ENCODE measurements at regions of chr3 and their contacts with region 1.

Region 1: DNA sequence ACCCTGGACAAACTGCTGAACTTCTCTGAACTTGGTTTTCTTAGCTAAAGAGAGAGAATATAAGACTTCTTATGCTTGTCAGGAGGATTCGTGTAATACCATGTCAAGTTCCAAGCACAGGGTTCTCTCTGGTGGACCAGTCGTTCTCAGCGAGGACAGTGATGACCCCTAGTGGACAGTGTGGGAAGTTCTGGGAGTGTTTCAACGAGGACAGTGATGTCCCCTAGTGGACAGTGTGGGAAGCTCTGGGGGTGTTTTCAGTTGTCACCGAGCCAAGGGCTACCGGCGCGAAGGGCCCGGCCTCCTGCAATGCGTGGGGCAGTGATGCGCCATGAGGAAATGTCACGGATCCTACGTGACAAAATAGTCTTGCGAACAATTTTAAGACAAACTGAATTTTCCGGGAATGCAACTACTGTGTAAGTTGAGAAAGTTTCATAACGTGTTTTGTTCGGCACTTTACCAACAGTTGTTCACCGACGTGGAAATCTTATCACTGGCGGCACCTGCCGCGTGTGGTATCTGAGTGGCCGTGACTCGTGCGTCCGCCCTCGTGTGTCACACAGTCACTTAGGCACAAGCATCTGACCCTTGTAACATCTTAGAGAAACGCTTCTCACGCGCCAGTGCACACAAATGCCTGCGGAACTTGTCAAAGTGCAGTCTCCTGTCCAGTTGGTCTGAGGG is 39.3 kb upstream of the MUC4 start:
- DNase-seq: peak; percentile 91 to 96 (median 93)
- H3K4me3 ChIP-seq: peak overlapping the region in 4 of 7 experiments; percentile 9 to 57 (median 38)
- H3K27ac ChIP-seq: peak overlapping the region; percentile 12 to 30
- H3K4me1 ChIP-seq: peaks cover 10 to 50% (median 39%) of the 10 kb centered on the region in 4 experiments
- H3K27me3 ChIP-seq: no peaks in the 10 kb centered on the region

Region 2: GRCh38 chr3:195806211-195806915 is 44.6 kb before region 1 on chr3:
- CTCF ChIA-PET with region 1: interaction called, 11 read pairs
- POLR2A ChIA-PET with region 1: no interaction called
- DNase-seq: peak in 2 of 3 donors; percentile 57 to 63
- H3K4me3 ChIP-seq: no peak overlapping the region
- H3K27ac ChIP-seq: no peak overlapping the region
- H3K4me1 ChIP-seq: peaks cover 12 to 59% (median 48%) of the 10 kb centered on the region in 4 experiments
- H3K27me3 ChIP-seq: no peaks in the 10 kb centered on the region

Region 3: DNA sequence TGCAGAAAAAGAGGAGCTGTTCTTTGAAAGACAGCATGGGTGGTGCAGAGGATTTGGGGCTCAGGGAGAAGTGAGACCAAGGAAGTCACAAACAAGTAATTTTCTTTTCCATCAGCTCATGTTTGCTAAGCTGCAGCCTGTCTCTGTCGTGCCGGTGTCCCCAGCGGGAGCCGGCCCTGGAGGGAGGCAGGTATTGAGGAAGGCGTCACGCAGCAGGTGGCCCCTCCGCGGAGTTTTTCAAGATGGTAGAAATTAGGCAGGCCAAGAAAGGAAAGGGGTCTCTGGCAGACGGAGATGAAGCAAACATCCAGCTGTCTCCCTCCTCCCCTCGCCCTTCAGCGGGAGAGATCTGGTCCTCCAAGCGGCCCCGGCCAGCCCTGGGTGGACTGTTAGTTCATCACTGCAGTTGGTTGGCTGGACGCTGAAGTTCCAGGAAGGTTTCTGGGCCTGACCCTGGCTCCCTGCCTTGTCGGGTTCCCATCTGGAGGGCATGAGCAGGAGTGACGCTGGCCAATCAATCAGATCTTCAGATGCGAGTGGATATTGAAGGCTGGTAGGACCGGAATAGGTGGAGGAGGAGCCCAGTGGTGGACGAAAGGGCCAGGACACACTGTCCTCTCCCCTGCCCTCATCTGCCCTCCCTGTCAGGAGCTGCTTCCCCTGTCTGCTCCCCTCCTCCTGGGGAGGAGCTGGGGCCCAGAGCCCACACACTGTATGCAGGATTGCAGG is 11.6 kb before region 1 on chr3:
- CTCF ChIA-PET with region 1: interaction called, 21 read pairs
- POLR2A ChIA-PET with region 1: no interaction called
- DNase-seq: no peak
- H3K4me3 ChIP-seq: no peak overlapping the region
- H3K27ac ChIP-seq: no peak overlapping the region
- H3K4me1 ChIP-seq: no peaks in the 10 kb centered on the region
- H3K27me3 ChIP-seq: no peaks in the 10 kb centered on the region

Region 4: DNA sequence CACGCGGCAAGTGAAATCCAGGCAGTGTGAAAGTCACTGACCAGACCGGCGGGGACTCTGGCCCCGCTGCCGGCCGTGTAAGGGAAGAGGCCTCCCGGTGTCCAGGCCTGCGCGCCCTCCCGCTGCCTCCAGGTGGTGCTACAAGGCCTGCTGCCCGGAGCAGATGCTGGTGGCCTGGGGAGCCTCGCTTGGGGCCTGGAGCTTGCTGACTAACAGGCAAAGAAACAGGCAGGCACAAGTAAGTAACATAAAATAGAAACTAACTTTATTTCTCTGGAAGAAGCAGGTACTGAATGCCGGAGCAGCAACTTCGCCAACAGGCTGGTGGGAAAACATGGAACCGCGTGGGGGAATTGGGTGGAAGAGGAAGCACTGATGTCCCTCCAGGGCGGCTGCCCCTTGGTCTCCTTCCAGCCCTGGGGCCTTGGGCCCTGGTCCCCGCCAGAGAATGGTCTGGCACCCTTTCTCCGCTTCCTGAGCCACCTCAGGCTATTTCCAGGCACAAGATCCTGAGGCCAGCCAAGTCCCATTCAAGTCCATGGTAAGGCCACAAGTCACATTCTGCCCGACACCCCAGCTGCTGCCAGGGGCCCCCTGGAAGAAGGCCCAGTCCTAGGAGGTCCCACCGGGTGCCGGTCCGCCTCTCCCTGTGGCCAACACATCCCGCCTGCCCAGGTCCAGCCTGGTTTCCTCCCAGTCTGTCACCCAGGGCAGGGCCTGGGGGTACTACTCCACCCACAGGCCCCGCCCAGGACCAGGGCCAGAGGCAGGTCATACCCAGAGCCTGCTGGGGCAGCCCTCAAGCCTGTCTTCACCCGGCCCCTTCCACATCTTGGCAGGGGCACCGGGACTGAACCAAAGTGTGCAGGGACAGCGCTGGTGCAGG is 12.4 kb after region 1 on chr3:
- CTCF ChIA-PET with region 1: interaction called, 23 read pairs
- POLR2A ChIA-PET with region 1: no interaction called
- DNase-seq: peak; percentile 72 to 83 (median 83)
- H3K4me3 ChIP-seq: no peak overlapping the region
- H3K27ac ChIP-seq: no peak overlapping the region
- H3K4me1 ChIP-seq: peaks cover 0 to 23% (median 7%) of the 10 kb centered on the region in 4 experiments
- H3K27me3 ChIP-seq: no peaks in the 10 kb centered on the region

Region 5: GRCh38 chr3:195894780-195895607 is 44.0 kb after region 1 on chr3:
- CTCF ChIA-PET with region 1: interaction called, 238 read pairs
- POLR2A ChIA-PET with region 1: interaction called, 6 read pairs
- DNase-seq: peak; percentile 79 to 85 (median 82)
- H3K4me3 ChIP-seq: peak overlapping the region; percentile 36 to 88 (median 82)
- H3K27ac ChIP-seq: peak overlapping the region; percentile 50 to 83
- H3K4me1 ChIP-seq: peaks cover 4 to 73% (median 67%) of the 10 kb centered on the region in 4 experiments
- H3K27me3 ChIP-seq: no peaks in the 10 kb centered on the region

Region 6: GRCh38 chr3:195909644-195910508 is 58.9 kb after region 1 on chr3:
- CTCF ChIA-PET with region 1: interaction called, 238 read pairs
- POLR2A ChIA-PET with region 1: interaction called, 7 read pairs
- DNase-seq: peak; percentile 74 to 85 (median 80)
- H3K4me3 ChIP-seq: peak overlapping the region; percentile 26 to 89 (median 75)
- H3K27ac ChIP-seq: peak overlapping the region in 1 of 2 experiments; percentile 43
- H3K4me1 ChIP-seq: peaks cover 13 to 62% (median 52%) of the 10 kb centered on the region in 4 experiments
- H3K27me3 ChIP-seq: no peaks in the 10 kb centered on the region

Region 7: GRCh38 chr3:195921334-195921791 is 70.4 kb after region 1 on chr3:
- CTCF ChIA-PET with region 1: interaction called, 88 read pairs
- POLR2A ChIA-PET with region 1: no interaction called
- DNase-seq: no peak
- H3K4me3 ChIP-seq: no peak overlapping the region
- H3K27ac ChIP-seq: no peak overlapping the region
- H3K4me1 ChIP-seq: peaks cover 0 to 9% (median 3%) of the 10 kb centered on the region in 4 experiments
- H3K27me3 ChIP-seq: peaks cover 0 to 1% (median 0%) of the 10 kb centered on the region in 5 experiments